MCF 10A (cell line): ENCODE measurements at regions of chr3 and their contacts with region 1.

Region 1: DNA sequence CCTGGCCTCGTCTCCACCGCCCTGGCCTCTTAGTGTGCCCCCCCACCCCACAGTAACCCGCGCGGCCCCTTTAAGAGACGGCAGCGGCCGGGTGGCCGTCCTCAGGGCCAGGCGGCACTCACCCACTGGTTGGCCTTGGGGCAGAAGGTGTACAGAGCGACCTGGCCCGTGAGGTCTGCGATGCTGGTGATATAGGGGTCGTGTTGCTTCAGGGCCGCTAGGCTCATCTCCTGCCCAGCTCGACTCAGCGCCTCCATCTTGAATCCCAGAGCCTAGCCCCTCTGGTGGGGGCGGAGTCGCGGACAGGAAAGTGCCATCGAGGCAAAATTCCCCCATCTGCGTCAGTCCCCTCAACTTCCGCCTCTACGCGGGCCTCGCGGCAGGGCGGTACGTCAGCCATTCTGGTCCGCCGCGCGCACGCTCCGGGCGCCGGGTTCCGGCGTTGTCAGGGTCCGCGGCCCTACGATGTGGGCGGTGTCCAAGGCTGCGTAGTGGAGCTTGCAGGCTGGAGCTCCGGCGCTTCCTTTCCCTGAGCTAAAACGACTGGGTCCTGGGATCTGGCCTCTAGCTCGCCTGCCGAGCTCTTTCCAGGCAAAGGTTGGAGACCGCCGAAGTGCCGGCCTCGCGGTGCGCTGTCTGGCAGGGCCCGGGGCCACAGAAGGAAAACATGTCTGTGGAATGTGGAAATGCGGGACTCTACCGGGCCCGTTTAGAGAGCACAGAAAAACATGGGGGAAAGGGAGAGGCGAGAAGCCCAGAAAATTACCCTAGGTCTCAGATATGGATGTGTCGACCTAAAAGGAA is at the start of gene DCP1A:
- DNase-seq: peak; percentile 96
- H3K4me3 Mint-ChIP-seq: peak within 1 kb of the TSS; percentile 99
- H3K27ac Mint-ChIP-seq: peak within 1 kb of the TSS; percentile 99
- H3K4me1 Mint-ChIP-seq: peaks cover 13% of the 10 kb centered on the region
- H3K27me3 Mint-ChIP-seq: no peaks in the 10 kb centered on the region
- CTCF ChIP-seq: no peak
- total RNA-seq, gene DCP1A: 22.1 and 23.6 TPM in 2 replicates

Region 2: DNA sequence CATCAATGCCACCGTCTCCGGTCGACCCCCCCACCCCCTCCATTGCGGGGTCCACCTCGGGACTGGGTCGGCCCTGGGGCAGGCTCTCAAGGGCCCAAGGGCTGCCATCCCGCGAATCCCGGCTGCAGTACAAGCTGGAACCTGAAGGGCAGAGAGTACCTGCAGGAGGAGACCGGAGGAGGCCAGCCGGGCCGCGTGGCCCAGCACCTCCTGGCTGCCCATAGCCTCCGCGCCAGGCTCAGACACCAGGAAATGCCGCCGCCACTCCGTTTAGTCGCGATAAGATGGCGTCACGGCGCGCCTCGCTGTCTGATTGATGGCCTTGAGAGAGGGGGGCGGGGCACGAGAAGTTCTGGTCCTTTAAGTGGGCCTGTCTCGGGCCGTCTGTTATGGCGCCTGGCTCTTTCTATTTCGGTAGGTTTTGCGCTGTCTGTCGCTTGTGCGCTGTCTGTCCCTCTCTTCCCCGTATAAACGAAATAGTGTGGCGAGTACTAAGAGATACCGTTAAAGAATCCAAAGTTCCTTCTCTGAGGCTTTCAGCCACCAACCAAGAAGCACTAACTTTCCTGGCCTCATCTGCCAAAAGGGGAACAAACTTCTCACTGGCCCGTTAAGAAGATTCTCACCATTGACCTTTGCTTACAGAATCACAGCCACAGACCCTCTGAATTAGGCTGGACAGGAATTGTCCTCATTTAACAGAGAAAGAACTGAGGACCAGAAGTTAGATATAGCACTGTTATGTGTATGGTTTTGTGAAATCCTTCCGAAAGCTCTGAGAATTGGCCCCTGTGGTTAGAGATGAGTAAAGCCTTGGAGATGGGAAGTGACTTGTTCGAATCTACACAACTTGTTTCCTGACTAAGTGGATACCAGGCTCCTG is 217.0 kb before region 1 on chr3 and contains the start of gene RFT1:
- CTCF ChIA-PET with region 1: interaction called, 5 read pairs
- POLR2A ChIA-PET with region 1: interaction called, 12 read pairs
- intact Hi-C with region 1: no loop called
- DNase-seq: peak; percentile 98
- H3K4me3 Mint-ChIP-seq: peak within 1 kb of the TSS; percentile 92
- H3K27ac Mint-ChIP-seq: peak within 1 kb of the TSS; percentile 97
- H3K4me1 Mint-ChIP-seq: peaks cover 8% of the 10 kb centered on the region
- H3K27me3 Mint-ChIP-seq: no peaks in the 10 kb centered on the region
- CTCF ChIP-seq: no peak
- total RNA-seq, gene RFT1: 40.1 and 42.7 TPM in 2 replicates

Region 3: DNA sequence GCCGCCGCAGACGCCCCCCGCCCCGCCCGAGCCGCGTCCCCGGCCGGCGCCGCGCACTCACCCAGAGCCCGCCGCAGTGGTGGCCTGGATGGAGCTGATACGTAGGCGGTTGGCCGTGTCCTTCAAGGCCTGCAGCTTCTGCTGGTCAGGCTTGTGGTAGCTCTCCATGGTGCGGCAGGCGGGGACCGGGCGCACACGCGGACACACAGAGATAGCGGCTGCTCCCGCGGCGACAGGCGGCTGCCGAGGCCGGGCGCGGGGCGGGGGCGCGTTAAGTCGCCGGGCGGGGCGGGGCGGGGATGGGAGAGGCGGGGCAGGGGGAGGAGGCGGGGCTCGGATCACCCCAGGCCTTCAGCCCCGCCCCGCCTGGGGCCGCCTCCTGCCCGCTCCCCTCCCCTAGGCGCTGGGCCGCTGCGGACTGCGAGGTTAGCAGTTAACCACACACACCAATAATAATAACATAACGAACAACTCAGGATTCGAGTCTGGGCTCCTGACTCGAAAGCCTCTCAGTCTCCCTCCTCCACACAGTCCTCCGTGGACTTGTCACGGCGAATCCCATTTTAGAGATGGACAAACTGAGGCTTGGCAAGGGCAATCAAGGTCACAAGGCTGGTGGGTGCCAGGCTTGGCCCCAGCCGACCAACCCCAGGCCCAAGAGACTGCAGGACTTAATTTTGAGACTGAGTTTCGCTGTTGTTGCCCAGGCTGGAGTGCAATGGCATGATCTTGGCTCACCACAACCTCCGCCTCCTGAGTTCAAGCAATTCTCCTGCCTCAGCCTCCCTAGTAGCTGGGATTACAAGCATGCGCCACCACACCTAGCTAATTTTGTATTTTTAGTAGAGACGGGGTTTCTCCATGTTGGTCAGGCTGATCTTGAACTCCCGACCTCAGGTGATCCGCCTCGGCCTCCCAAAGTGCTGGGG is 91.4 kb before region 1 on chr3 and contains the start of gene TKT:
- CTCF ChIA-PET with region 1: no interaction called
- POLR2A ChIA-PET with region 1: interaction called, 17 read pairs
- intact Hi-C with region 1: no loop called
- DNase-seq: peak; percentile 84
- H3K4me3 Mint-ChIP-seq: peak within 1 kb of the TSS; percentile 95
- H3K27ac Mint-ChIP-seq: peak within 1 kb of the TSS; percentile 67
- H3K4me1 Mint-ChIP-seq: peaks cover 23% of the 10 kb centered on the region
- H3K27me3 Mint-ChIP-seq: no peaks in the 10 kb centered on the region
- CTCF ChIP-seq: no peak
- total RNA-seq, gene TKT: 179 and 326 TPM in 2 replicates

Region 4: DNA sequence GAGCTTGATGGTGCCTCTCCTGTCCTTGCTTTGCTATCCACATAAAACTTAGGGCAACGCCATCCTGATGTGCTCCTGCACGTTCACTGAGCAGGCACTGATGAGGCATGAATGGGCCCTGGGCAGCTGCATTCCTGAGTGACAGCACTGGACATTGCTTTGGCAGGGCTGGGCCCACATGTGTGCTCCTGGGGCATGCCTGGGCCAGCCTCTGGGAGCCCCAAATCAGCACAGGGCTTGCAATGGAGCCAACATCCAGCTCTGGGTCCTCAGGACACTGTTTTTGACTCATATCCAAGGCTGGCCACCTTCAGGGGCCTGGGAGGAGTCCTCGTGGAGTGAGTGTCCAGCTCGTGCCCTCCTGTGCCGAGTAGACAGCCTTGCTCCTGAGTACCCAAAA is 85.8 kb before region 1 on chr3:
- CTCF ChIA-PET with region 1: no interaction called
- POLR2A ChIA-PET with region 1: interaction called, 11 read pairs
- intact Hi-C with region 1: no loop called
- DNase-seq: peak; percentile 69
- H3K4me3 Mint-ChIP-seq: no peak overlapping the region
- H3K27ac Mint-ChIP-seq: peak overlapping the region; percentile 74
- H3K4me1 Mint-ChIP-seq: peaks cover 22% of the 10 kb centered on the region
- H3K27me3 Mint-ChIP-seq: no peaks in the 10 kb centered on the region
- CTCF ChIP-seq: no peak

Region 5: GRCh38 chr3:53329897-53330296 is 17.6 kb before region 1 on chr3:
- CTCF ChIA-PET with region 1: interaction called, 4 read pairs
- POLR2A ChIA-PET with region 1: interaction called, 15 read pairs
- intact Hi-C with region 1: no loop called
- DNase-seq: no peak
- H3K4me3 Mint-ChIP-seq: no peak overlapping the region
- H3K27ac Mint-ChIP-seq: no peak overlapping the region
- H3K4me1 Mint-ChIP-seq: no peaks in the 10 kb centered on the region
- H3K27me3 Mint-ChIP-seq: no peaks in the 10 kb centered on the region
- CTCF ChIP-seq: no peak

Region 6: DNA sequence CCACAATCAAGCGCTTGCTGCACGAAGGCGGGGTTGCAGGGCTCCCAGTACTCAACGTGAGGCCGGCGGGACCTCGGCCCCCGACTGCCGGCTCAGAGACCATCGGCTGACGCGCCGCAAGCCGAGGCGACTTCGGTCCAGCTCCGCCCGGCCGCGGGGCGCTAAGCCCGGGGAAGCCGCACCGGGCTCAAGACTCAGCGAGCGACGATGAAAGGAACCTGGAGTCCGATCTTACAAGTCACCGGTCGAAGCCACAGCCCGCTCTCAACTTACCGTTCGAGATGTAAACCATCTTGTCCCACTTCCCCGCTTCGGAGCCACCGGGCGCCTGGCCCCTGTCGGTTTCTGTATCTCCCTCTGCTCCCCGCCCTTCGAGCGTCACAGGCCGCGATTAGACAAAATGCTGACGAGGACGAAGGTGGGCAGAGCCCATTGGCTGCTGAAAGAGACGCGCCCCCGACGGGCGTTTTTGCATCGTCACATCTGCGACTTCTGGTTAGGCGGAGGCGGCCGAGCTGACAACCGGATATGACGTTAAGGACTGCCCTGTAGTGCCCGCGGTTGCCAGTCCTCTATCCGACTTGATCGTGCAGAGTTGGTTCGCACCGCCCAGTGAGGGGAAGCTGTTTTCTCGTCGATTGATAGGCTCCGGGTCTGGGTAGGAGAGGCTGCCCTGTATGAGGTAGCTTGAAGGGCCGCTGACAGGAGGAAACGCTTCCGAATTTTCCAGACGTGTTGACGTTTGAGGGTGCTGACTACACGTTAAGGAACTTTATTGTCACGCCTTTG is 544.2 kb after region 1 on chr3 and contains the start of gene SELENOK:
- CTCF ChIA-PET with region 1: interaction called, 4 read pairs
- POLR2A ChIA-PET with region 1: interaction called, 36 read pairs
- intact Hi-C with region 1: no loop called
- DNase-seq: peak; percentile 99
- H3K4me3 Mint-ChIP-seq: peak within 1 kb of the TSS; percentile 91
- H3K27ac Mint-ChIP-seq: peak within 1 kb of the TSS; percentile 98
- H3K4me1 Mint-ChIP-seq: peaks cover 17% of the 10 kb centered on the region
- H3K27me3 Mint-ChIP-seq: peaks cover 10% of the 10 kb centered on the region
- CTCF ChIP-seq: no peak
- total RNA-seq, gene SELENOK: 55.6 and 66.4 TPM in 2 replicates